ENCODE measurements at regions of chr13 and their contacts with region 1.

Region 1: DNA sequence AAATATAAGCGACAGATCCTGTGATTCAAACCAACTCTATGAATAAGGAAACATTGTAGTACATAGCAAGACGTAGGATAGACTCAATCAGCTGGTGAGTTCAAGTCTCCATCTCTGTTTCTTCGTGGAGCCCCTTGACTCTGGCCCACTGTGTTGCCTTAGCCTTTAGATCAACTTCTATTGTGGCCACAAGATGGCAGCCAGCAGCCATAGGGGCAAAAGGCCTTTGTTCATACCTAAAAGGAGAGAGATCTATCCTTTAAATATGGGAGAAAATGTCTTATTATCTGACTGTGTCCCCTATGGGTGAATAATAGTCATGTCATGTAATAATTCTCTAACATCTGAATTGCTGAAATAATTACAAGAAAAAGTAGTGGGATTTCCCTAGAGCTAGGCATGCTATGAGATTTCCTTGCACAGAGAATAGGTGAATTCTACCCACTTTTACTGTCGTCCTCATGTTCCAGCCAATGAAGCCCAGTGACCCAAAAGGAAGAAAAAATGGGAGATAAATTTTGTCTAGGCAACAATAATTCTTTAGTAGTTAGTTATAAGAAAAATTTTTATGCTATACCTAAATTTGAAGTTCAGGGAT is 129.4 kb downstream of the PCDH20 start:
- DNase-seq: peak; percentile 42
- ATAC-seq: peak; percentile 71; the same call in 1 of the 2 replicates
- H3K4me3 ChIP-seq: no peak overlapping the region
- H3K27ac ChIP-seq: no peak overlapping the region
- H3K4me1 ChIP-seq: no peaks in the 10 kb centered on the region
- H3K27me3 ChIP-seq: no peaks in the 10 kb centered on the region
- CTCF ChIP-seq: peak; percentile 61

Region 2: GRCh38 chr13:61339054-61339621 is 52.9 kb after region 1 on chr13:
- CTCF ChIA-PET with region 1: no interaction called
- POLR2A ChIA-PET with region 1: no interaction called
- intact Hi-C with region 1: no loop called
- DNase-seq: no peak
- ATAC-seq: no peak
- H3K4me3 ChIP-seq: no peak overlapping the region
- H3K27ac ChIP-seq: no peak overlapping the region
- H3K4me1 ChIP-seq: no peaks in the 10 kb centered on the region
- H3K27me3 ChIP-seq: no peaks in the 10 kb centered on the region
- CTCF ChIP-seq: no peak

Region 3: GRCh38 chr13:61410669-61411297 is 124.5 kb after region 1 on chr13:
- CTCF ChIA-PET with region 1: interaction called, 6 read pairs
- POLR2A ChIA-PET with region 1: no interaction called
- intact Hi-C with region 1: loop called (anchors 1 kb)
- DNase-seq: peak; percentile 48
- ATAC-seq: no peak
- H3K4me3 ChIP-seq: no peak overlapping the region
- H3K27ac ChIP-seq: no peak overlapping the region
- H3K4me1 ChIP-seq: no peaks in the 10 kb centered on the region
- H3K27me3 ChIP-seq: no peaks in the 10 kb centered on the region
- CTCF ChIP-seq: peak; percentile 49; the same call in 1 of the 2 replicates

Region 4: DNA sequence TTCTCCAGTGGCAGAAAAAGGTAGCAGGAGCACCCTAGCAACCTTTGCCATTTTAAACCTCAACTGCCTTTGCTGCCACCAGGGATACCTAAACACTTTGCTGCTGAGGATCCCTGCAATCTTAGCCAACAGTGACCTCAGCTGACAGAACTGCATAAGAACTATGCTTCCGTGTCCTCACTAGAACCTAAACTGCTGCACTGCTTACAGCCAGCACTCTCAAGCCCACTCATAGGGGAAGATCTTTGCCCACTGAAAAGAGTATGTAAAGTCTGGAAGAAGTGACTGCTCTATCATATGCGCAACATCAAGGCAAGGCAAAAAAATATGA is 399.4 kb after region 1 on chr13:
- CTCF ChIA-PET with region 1: no interaction called
- POLR2A ChIA-PET with region 1: no interaction called
- intact Hi-C with region 1: loop called (anchors 5 kb)
- DNase-seq: no peak
- ATAC-seq: peak; percentile 65
- H3K4me3 ChIP-seq: no peak overlapping the region
- H3K27ac ChIP-seq: no peak overlapping the region
- H3K4me1 ChIP-seq: no peaks in the 10 kb centered on the region
- H3K27me3 ChIP-seq: no peaks in the 10 kb centered on the region
- CTCF ChIP-seq: 0 out of 2 replicates have a peak, but pooled peaks have one; percentile 18

Measured in PC-3 (cell line).